IMR-90 (cell line): ENCODE measurements at regions of chr11 and their contacts with region 1.

Region 1: GRCh38 chr11:64878494-64879243 is at the start of gene EHD1:
- DNase-seq: peak; percentile 96
- ATAC-seq: peak; percentile 93
- H3K4me3 ChIP-seq: peak within 1 kb of the TSS; percentile 95
- H3K27ac ChIP-seq: peak within 1 kb of the TSS; percentile 84
- H3K4me1 ChIP-seq: peaks cover 15% of the 10 kb centered on the region
- H3K27me3 ChIP-seq: no peaks in the 10 kb centered on the region
- CTCF ChIP-seq: peak; percentile 80
- POLR2A ChIP-seq: peak; percentile 100
- RAD21 ChIP-seq: peak; percentile 43
- total RNA-seq, gene EHD1: 107 and 125 TPM in 2 replicates

Region 2: GRCh38 chr11:63974259-63975143 is 904.2 kb before region 1 on chr11 and contains the start of gene COX8A:
- CTCF ChIA-PET with region 1: no interaction called
- POLR2A ChIA-PET with region 1: interaction called, 12 read pairs
- dilution Hi-C with region 1: no loop called
- in situ Hi-C with region 1: no loop called
- intact Hi-C with region 1: no loop called
- DNase-seq: peak; percentile 100
- ATAC-seq: peak; percentile 98
- H3K4me3 ChIP-seq: peak within 1 kb of the TSS; percentile 82
- H3K27ac ChIP-seq: peak within 1 kb of the TSS; percentile 86
- H3K4me1 ChIP-seq: peaks cover 9% of the 10 kb centered on the region
- H3K27me3 ChIP-seq: no peaks in the 10 kb centered on the region
- CTCF ChIP-seq: 0 out of 2 replicates have a peak, but pooled peaks have one; percentile 14
- POLR2A ChIP-seq: peak; percentile 62; the same call in 1 of the 2 replicates
- RAD21 ChIP-seq: 0 out of 2 replicates have a peak, but pooled peaks have one; percentile 4
- total RNA-seq, gene COX8A: 250 and 315 TPM in 2 replicates

Region 3: DNA sequence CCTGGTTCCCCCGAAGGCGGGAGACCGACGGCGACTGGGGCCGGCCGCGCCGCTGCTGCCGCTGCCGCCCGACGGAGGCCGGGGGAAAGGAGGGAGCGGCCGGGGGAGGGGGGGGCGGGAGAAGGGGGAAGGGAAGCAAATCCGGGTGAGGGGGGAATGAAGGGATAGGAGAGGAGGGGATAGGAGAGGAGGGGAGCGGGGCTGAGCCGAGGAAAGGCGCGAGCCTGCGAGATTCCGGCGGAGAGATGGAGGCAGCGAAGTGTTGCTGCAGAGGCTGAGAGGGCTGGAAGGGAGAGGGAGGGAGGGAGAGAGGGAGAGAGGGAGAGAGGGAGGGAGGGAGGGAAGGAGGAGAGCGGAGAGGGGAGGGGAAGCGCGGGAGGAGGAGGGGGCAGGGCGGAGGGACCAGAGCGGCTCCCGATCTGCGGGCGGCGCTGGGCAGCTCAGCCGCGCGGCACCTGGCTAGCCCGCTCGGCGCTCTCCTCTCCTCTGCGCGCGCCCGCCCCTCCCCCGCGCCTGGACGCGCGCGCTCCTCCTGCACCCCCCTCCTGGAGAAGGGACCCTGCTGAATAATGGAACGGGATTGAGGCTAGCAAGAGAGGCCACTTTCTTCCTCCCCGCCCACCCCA is 235.3 kb before region 1 on chr11:
- CTCF ChIA-PET with region 1: no interaction called
- POLR2A ChIA-PET with region 1: no interaction called
- dilution Hi-C with region 1: no loop called
- in situ Hi-C with region 1: no loop called
- intact Hi-C with region 1: no loop called
- DNase-seq: no peak
- ATAC-seq: no peak; the same call in 1 of the 2 replicates
- H3K4me3 ChIP-seq: no peak overlapping the region
- H3K27ac ChIP-seq: no peak overlapping the region
- H3K4me1 ChIP-seq: no peaks in the 10 kb centered on the region
- H3K27me3 ChIP-seq: peaks cover 90% of the 10 kb centered on the region
- CTCF ChIP-seq: no peak
- POLR2A ChIP-seq: no peak
- RAD21 ChIP-seq: no peak

Region 4: GRCh38 chr11:64864473-64865285 is 14.0 kb before region 1 on chr11:
- CTCF ChIA-PET with region 1: interaction called, 4 read pairs
- POLR2A ChIA-PET with region 1: interaction called, 3 read pairs
- dilution Hi-C with region 1: no loop called
- in situ Hi-C with region 1: no loop called
- intact Hi-C with region 1: loop called (anchors 2 kb)
- DNase-seq: peak; percentile 97
- ATAC-seq: peak; percentile 73
- H3K4me3 ChIP-seq: no peak overlapping the region
- H3K27ac ChIP-seq: peak overlapping the region; percentile 97
- H3K4me1 ChIP-seq: peaks cover 45% of the 10 kb centered on the region
- H3K27me3 ChIP-seq: no peaks in the 10 kb centered on the region
- CTCF ChIP-seq: no peak
- POLR2A ChIP-seq: no peak
- RAD21 ChIP-seq: peak; percentile 10; the same call in 1 of the 2 replicates